ENCODE measurements at regions of chr6 and their contacts with region 1.

Region 1: GRCh38 chr6:151103266-151103665 is 136.5 kb upstream of the AKAP12 start:
- DNase-seq: no peak
- H3K4me3 ChIP-seq: no peak overlapping the region
- H3K27ac ChIP-seq: no peak overlapping the region
- H3K27me3 ChIP-seq: no peaks in the 10 kb centered on the region
- CTCF ChIP-seq: no peak

Region 2: GRCh38 chr6:151280859-151281258 is 177.6 kb after region 1 on chr6:
- CTCF ChIA-PET with region 1: no interaction called
- POLR2A ChIA-PET with region 1: interaction called, 10 read pairs
- DNase-seq: no peak
- H3K4me3 ChIP-seq: no peak overlapping the region
- H3K27ac ChIP-seq: no peak overlapping the region
- H3K27me3 ChIP-seq: no peaks in the 10 kb centered on the region
- CTCF ChIP-seq: no peak

Measured in AG04450 (cell line).